ENCODE measurements at regions of chr6 and their contacts with region 1.

Region 1: DNA sequence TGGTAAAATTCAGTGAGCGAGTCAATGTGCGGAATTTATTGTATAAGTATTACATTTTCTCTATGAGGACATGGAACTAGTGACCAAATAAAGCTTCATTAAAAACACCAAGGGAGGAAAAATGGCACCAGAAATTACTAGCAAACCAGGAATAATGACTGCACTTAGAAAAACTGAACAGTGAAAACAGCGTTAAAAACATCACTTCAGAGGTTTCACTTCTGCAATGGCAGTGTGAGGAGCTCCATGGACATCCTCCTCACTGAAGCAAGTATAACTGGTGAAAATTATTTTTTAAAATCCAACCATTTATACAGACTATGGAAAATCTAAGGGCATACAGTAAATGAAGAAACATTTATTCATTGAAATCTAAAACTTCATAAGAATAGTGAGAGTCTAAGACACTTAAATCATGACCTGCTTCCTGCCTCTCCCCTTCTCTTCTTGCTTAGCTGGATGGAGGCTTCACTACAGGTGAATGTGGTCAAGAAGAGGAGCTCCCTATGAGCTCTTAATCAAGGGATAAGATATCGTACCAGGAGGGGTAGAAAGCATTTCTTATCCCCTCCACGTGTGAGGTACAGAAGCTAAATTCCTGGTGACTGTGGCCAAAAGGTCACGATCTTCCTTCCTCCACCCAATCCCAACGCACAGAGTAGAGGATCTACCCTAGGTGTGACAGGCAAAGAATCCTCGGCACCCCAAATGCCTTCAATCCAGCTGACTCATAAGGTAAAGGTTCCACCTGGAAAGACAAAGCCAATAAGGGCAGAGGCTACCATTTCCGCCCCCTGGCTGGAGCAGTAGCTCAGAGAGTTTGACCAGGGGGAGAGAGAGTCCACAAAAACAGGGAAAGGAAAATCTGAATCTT is 12.3 kb upstream of the ASF1A start:
- DNase-seq: no peak
- ATAC-seq: peak; percentile 58
- H3K4me3 Mint-ChIP-seq: peak overlapping the region; percentile 63
- H3K27ac Mint-ChIP-seq: peak overlapping the region; percentile 72
- H3K4me1 Mint-ChIP-seq: peaks cover 66% of the 10 kb centered on the region
- H3K27me3 Mint-ChIP-seq: no peaks in the 10 kb centered on the region
- CTCF ChIP-seq: no peak

Region 2: DNA sequence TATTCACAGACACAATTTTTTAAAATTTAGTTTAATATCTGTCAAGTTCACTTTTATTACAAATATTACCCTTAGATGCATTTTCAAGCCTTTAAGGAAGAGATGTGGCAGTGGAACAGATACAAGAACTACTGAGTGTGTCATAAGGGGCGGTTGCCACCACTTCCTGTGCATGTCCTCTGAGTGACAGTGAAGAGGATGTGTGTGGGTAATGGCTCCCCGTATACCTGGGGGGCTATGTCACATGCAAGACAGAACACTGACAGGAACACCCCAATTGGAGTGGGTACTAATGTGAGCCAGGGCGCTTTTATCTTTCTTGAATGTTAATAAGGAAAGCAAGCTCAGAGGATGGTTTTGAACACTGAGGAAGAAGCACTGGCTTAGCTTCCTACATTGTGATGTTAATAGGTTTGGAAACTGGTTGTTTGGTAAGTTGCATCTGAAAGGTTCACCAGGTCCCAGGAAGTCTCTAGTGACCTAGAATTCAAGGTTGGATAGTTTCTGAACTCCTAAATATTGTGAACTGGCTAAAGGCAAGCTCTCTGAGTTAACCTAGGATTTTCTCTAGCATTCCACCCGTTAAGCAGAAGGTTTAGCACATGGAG is 71.2 kb before region 1 on chr6:
- CTCF ChIA-PET with region 1: no interaction called
- POLR2A ChIA-PET with region 1: no interaction called
- intact Hi-C with region 1: no loop called
- DNase-seq: no peak
- ATAC-seq: peak; percentile 82
- H3K4me3 Mint-ChIP-seq: peak overlapping the region; percentile 69
- H3K27ac Mint-ChIP-seq: peak overlapping the region; percentile 83
- H3K4me1 Mint-ChIP-seq: peaks cover 36% of the 10 kb centered on the region
- H3K27me3 Mint-ChIP-seq: no peaks in the 10 kb centered on the region
- CTCF ChIP-seq: no peak

Region 3: DNA sequence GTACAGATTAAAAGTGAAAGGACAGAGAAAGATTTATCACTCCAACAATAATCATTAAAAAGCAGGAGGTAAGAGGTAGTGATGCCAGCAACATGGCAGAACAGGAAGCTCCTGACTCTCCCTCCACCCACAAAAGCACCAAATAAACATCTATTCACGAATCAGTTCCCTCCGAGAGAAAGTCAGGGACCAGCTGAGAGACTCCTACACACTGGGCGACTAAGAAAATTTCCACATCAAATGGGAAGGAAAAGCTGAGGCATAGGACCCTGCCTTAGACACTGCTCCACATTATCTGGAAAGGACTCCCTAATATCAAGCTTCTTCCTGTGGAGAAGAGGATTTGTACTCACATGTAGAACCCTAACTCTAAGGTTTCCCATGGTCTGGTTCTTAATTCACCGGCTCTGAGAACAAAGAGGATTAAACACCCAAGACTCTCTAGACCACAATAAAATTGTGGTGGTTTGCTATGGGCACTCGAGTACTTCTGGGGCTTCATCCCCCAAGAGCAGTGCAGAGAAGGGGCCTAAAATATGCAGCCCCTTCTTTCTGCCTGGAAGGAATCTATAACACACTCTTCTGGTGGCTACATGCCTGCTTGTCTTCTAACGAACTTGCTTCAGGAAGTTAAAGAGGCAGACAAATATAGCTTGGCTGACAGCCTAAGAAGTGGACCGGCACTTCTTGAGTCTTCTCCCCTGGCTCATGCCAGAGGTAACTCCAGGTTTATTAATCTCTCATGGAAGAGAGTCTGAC is 17.2 kb before region 1 on chr6:
- CTCF ChIA-PET with region 1: interaction called, 3 read pairs
- POLR2A ChIA-PET with region 1: no interaction called
- intact Hi-C with region 1: loop called (anchors 2 kb)
- DNase-seq: no peak
- ATAC-seq: no peak
- H3K4me3 Mint-ChIP-seq: peak overlapping the region; percentile 46
- H3K27ac Mint-ChIP-seq: peak overlapping the region; percentile 50
- H3K4me1 Mint-ChIP-seq: peaks cover 48% of the 10 kb centered on the region
- H3K27me3 Mint-ChIP-seq: no peaks in the 10 kb centered on the region
- CTCF ChIP-seq: no peak